ENCODE measurements at regions of chr13 and their contacts with region 1.

Region 1: DNA sequence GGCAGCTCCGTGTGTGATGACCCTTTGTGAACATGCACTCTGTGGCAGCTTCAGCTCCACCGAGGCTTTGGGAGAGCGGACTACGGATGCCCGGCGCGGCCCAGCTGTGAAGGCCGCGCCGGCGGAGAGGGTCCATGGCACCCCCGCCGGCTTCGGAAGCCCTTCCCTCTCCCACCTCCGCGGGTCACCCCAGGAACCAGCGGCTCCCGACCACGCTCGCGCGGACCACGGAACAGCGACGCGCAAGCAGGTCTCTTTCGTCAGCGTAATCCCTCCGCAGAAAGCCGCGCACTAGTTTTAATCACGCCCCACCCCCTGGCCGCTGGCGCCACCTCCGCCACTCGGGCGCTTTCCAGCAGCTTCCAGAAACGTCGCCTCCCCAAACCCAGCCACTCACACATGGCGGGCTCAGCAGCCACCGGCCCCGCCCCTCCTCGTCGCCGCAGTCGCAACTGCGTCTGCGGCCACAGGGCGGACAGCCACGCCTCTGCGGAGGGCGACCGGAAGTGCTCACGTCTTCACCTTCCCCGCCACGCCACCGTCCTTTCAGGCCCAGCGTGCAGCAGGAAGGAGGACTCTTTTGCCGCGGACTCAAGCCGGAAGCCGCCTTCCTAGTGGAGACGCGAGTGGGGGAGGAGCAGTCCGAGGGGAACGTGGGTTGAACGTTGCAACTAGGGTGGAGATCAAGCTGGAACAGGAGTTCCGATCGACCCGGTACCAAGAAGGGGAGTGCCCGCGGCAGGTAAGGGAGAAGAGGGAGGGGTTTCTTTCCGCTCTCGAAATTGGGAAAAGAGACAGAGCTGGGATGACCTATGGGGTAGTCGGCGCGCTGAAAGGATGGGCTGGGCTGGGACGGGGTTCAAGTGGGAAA is at the start of gene USPL1:
- DNase-seq: peak; percentile 92 to 99 (median 97)

Region 2: DNA sequence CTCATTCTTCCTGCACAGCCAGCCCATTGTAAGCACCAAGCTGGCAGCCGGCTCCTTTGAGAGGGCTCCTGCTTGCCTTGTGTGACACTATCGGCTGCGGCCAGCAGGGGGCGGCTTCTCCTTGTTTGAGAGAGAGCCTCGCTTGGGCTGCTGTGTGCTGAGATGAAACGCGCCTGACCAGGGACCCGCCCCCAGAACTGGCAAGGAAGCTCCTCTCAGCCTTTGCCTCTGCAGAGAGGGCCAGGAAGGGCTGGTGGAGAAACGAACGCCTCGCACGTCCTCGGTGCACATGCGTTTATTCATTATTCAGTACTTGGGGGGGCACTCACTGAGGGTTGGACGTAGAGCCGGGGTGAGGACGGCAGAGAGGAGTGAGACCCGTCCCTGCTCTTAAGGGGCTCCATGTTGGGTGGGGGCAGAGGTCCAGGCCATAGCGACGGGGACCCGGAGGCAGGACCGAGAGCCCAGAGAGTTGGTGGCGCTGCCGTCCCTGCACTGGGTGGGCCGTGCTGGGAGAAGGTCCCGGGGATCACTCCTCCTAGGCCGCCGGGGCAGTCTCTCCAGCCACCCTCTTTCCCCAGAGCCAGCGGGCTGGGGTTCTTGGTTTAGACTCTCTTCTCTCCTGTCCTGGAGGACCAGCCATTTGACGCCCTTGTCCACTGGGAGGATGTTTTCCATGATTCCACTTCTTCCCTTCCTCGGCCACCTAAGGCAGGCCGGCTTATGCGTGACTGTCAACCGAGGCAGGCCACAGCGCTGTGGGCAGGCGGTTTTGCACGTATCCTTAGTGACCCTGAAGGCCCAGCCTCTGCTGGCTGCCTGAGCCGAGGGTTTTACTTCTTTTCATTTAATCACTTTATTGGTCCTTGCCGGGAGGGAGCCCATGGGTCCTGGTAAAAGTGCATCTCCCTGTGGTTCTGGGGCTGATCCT is 484.7 kb before region 1 on chr13:
- intact Hi-C with region 1: no loop called
- DNase-seq: peak; percentile 94 to 100 (median 98)

Region 3: DNA sequence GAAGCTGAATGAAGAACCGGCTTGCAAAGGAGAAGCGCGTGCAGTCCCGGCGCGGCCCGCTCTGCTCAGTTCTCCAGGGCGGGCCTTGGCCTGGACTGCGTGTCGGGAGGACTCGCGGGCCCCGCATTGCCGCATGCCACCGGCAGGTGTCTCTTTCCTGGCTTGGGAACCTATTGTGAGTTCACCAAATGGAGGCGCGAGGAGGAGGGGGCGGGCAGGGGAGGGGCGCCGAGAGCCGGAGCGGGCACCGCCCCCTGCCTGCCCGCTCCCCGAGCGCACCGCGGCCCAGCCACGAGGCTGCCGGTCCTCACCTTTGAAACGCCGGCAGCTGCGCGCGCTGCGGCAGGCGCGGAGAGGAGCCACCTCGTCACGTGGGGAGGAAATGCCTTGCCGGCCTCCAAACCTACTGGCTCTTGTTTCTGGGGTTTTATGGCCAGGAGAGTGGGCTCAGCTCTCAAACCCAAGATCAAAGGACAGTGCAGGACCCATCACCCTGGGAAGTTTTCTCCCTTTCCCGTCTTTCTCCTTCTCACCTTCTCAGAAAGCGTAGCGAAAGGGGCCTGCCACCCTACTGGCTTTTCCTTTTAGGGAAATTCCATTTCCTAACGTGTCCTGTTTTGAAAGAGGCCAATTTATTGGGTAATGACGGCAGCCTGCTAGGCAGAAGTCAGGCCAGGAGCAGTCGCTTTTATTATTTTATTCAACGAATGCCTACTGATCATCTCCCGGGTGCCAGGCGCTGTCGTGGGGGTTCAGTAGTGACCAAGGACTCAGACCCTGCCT is 209.0 kb before region 1 on chr13:
- intact Hi-C with region 1: loop called (anchors 5 kb)
- DNase-seq: peak; percentile 89 to 97 (median 93)

Region 4: DNA sequence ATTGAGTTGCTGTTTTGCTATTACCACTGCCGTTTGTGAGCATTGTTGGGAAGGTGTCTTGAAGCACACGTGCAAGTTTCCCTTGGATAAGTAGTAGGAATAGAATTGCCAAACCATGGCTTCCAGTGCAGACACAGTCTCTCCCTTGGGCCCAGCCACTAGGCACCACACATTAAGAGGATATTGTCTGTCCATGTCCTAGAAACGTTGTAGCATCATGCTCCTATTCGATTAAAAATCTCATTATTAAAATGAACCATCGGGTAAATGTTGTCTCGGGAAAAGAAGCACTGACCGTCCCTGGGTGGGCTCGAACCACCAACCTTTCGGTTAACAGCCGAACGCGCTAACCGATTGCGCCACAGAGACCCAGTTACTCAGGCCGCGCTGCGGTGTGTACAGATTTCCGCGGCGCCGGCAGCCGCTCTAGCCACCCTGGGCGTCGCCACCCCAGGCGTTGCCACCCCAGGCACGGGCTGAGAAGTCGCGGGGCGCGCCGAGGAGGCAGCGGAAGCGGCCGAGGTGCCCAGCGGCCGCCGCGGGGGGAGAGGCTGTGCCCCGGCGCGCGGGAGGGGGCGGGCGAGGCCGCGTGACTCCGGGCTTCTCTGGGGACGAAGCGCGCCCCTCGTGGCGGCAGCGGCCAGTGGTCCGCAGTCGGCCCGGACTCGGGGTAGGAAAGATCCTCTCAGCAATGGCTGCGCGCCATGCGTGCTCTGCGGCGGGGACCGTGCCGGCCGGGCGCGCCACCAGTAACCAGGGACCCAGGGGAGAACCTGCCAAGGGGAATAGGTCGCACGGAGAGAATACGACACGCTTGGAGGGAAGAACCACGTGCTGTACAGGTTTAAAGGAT is 56.3 kb after region 1 on chr13:
- intact Hi-C with region 1: loop called (anchors 1 kb)
- DNase-seq: peak; percentile 74 to 95 (median 90)

Measured in head of caudate nucleus (tissue), 42 donors.